ENCODE measurements at regions of chr3 and their contacts with region 1.

Region 1: GRCh38 chr3:27467545-27467944 is 16.6 kb downstream of the SLC4A7 start:
- DNase-seq: peak in 4 of 5 donors; percentile 41 to 49 (median 42)
- H3K4me3 ChIP-seq: no peak overlapping the region
- H3K4me3 Mint-ChIP-seq: peak overlapping the region in 3 of 8 donors; percentile 4 to 44 (median 39)
- H3K27ac ChIP-seq: no peak overlapping the region
- H3K27ac Mint-ChIP-seq: peak overlapping the region in 5 of 7 donors; percentile 6 to 63 (median 27)
- H3K4me1 ChIP-seq: peaks cover 30% of the 10 kb centered on the region
- H3K4me1 Mint-ChIP-seq: peaks cover 25 to 57% (median 35%) of the 10 kb centered on the region in 4 donors
- H3K27me3 ChIP-seq: no peaks in the 10 kb centered on the region
- H3K27me3 Mint-ChIP-seq: no peaks in the 10 kb centered on the region

Region 2: DNA sequence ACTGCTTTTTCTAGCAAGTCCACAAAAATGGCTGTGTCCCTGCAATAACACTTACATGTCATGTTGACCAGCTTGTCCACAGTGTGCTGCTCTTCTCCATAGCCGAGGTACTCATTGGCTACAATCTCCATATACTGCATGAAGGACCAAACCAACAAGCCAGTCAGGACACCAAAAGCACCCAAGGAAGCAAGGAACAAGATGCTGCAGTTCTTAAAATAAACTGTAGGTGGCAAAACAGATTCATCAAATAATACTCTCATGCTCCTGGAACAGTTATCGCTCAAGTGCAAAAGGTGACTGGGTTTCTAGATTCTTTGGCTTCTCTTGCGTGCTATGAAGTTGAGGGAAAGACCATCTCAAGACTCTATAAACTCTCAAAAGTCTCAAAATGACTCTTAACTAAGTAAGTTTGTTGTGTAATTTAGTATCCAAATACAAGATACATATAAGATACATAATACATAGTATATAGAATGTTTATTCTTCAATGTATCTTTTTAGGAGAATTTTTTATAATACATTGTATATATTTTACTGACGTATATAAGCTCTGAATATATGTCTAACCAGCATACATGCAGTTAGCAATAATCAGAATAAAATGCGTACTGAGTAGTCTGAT is 155.4 kb before region 1 on chr3:
- CTCF ChIA-PET with region 1: interaction called, 6 read pairs
- POLR2A ChIA-PET with region 1: no interaction called
- intact Hi-C with region 1: loop called (anchors 1 kb)
- DNase-seq: peak in 4 of 5 donors; percentile 52 to 60 (median 59)
- H3K4me3 ChIP-seq: no peak overlapping the region
- H3K4me3 Mint-ChIP-seq: no peak overlapping the region
- H3K27ac ChIP-seq: no peak overlapping the region
- H3K27ac Mint-ChIP-seq: peak overlapping the region in 1 of 7 donors; percentile 5
- H3K4me1 ChIP-seq: no peaks in the 10 kb centered on the region
- H3K4me1 Mint-ChIP-seq: no peaks in the 10 kb centered on the region
- H3K27me3 ChIP-seq: no peaks in the 10 kb centered on the region
- H3K27me3 Mint-ChIP-seq: no peaks in the 10 kb centered on the region

Region 3: DNA sequence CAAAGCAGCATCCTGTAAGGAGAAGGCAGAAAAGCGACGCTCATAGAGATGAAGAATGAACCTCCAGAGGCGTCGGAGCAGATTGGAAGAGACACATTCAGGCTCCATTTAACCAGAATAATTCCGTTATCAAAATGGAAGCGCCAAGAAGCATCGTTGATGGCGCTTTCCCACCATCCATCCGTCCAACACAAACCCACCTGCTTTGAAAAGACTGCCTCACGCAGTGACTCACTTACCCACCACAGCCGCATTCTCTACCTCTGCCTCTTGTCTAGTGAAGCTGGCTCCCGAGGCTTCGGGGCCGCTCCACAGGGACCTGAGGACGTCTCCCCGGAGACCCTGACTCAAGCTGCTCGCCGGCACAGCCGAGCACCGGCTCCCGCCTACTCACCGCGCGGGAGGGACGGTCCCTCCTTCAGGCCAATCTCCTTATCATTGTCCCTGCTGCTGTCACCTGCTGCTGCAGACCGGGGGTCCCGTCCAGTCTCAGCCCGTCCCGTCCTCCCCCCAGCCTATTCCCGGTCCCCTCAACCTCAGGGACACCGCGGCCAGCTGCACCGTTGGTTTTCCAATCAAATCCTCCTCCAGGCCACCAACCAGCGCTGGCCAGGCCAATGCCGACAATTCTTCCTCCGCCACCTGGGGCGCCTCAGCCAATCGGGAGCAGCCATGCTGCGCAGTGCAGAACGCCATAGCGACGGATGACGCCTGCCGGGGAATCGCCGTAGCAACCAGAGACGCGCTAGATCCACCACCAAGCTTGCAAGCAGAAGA is 98.5 kb before region 1 on chr3 and contains the start of gene NEK10:
- CTCF ChIA-PET with region 1: interaction called, 10 read pairs
- POLR2A ChIA-PET with region 1: no interaction called
- intact Hi-C with region 1: no loop called
- DNase-seq: peak; percentile 91 to 94 (median 93)
- H3K4me3 ChIP-seq: peak within 1 kb of the TSS; percentile 64 to 81
- H3K4me3 Mint-ChIP-seq: peak within 1 kb of the TSS; percentile 91 to 97 (median 96)
- H3K27ac ChIP-seq: peak within 1 kb of the TSS; percentile 39
- H3K27ac Mint-ChIP-seq: peak within 1 kb of the TSS; percentile 80 to 98 (median 94)
- H3K4me1 ChIP-seq: peaks cover 11% of the 10 kb centered on the region
- H3K4me1 Mint-ChIP-seq: peaks cover 12 to 20% (median 17%) of the 10 kb centered on the region in 4 donors
- H3K27me3 ChIP-seq: no peaks in the 10 kb centered on the region
- H3K27me3 Mint-ChIP-seq: no peaks in the 10 kb centered on the region
- total RNA-seq, gene NEK10: 1.4 to 2.7 TPM

Region 4: DNA sequence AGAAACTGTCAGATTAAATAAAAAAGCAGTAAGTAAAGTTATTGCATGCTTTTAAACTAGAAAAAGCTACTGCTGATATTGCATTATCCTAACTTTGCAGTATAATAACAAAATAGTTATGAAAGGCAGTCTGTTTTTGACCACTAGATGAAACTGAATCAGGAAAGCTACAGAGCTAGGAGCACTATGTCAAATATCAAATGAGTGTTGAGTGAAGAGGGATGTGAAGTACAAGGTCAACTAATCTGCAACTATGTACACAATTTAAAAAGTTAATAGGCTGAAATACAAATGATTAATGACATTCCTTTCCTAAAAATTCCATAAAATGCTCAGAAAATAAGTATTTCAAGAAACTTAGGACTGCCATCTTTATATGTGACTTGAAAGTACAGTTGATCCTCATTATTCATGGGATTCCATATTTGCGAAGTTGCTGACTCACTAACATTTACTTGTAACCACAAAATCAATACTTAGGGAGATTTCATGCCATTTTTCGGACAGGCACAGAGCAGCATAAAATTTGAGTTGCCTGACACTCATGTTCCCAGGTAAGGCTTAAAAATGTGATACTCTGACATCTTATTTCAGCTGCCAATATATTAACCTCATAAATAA is 17.9 kb before region 1 on chr3:
- CTCF ChIA-PET with region 1: interaction called, 10 read pairs
- POLR2A ChIA-PET with region 1: no interaction called
- intact Hi-C with region 1: no loop called
- DNase-seq: no peak
- H3K4me3 ChIP-seq: no peak overlapping the region
- H3K4me3 Mint-ChIP-seq: no peak overlapping the region
- H3K27ac ChIP-seq: no peak overlapping the region
- H3K27ac Mint-ChIP-seq: peak overlapping the region in 1 of 7 donors; percentile 7
- H3K4me1 ChIP-seq: peaks cover 29% of the 10 kb centered on the region
- H3K4me1 Mint-ChIP-seq: peaks cover 26 to 44% (median 38%) of the 10 kb centered on the region in 4 donors
- H3K27me3 ChIP-seq: no peaks in the 10 kb centered on the region
- H3K27me3 Mint-ChIP-seq: no peaks in the 10 kb centered on the region

Region 5: DNA sequence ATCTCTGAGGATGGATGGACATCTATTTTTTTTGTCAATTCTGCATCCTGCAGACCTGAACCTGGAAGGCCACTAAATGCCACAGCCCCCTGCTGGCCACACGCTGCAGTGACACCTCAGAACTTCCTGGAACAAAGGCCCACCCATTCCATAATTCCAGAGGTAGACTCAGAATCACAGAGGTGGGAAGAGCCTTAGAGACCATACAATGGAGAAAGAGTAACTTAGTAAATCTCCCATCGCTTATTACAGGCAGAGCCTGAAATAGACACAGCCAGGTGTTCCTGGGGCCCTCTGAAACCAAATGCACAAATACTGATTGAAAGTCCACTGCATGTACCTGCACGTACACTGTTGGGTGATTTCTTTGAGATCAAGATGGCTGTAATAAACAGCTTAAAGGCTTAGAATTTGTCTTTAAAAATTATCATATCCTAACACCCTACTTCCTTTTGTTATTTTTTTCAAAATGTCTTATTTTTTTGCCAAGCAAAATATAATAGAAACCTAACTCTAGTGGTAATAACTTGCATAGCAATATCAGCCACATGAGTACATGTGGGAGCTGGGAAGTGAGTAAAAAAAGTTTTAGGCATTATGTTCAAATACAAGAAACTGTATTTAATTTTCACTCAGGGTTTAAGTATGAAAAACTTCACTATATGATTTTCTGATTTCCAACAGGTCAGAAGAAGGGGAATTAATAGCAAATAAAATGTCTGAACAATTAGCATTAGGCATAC is 191.9 kb after region 1 on chr3:
- CTCF ChIA-PET with region 1: interaction called, 8 read pairs
- POLR2A ChIA-PET with region 1: no interaction called
- intact Hi-C with region 1: loop called (anchors 5 kb)
- DNase-seq: peak in 4 of 5 donors; percentile 29 to 42 (median 38)
- H3K4me3 ChIP-seq: no peak overlapping the region
- H3K4me3 Mint-ChIP-seq: no peak overlapping the region
- H3K27ac ChIP-seq: no peak overlapping the region
- H3K27ac Mint-ChIP-seq: peak overlapping the region in 1 of 7 donors; percentile 30
- H3K4me1 ChIP-seq: no peaks in the 10 kb centered on the region
- H3K4me1 Mint-ChIP-seq: peaks cover 9 to 15% (median 11%) of the 10 kb centered on the region in 4 donors
- H3K27me3 ChIP-seq: no peaks in the 10 kb centered on the region
- H3K27me3 Mint-ChIP-seq: peaks cover 0 to 2% of the 10 kb centered on the region in 2 donors

Region 6: DNA sequence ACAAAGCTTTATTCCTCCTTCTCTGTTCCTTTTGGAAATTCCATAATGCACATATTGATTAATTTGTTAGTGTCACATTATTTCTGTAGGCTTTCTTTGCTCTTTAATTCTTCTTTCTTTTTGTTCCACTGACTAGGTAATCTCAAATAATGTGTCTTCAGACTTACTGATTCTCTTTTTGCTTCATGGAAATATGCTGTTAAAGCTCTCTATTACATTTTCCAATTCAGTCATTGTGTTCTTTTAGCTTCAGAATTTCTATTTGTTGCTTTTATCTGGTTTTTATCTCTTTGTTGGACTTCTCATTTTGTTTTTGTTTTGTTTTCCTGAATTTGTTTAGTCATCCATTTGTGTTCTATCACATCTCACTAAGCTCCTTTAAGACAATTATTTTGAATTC is 401.6 kb after region 1 on chr3:
- CTCF ChIA-PET with region 1: no interaction called
- POLR2A ChIA-PET with region 1: no interaction called
- intact Hi-C with region 1: no loop called
- DNase-seq: no peak
- H3K4me3 ChIP-seq: no peak overlapping the region
- H3K4me3 Mint-ChIP-seq: peak overlapping the region in 1 of 8 donors; percentile 28
- H3K27ac ChIP-seq: no peak overlapping the region
- H3K27ac Mint-ChIP-seq: peak overlapping the region in 1 of 7 donors; percentile 9
- H3K4me1 ChIP-seq: no peaks in the 10 kb centered on the region
- H3K4me1 Mint-ChIP-seq: peaks cover 0 to 5% (median 1%) of the 10 kb centered on the region in 4 donors
- H3K27me3 ChIP-seq: no peaks in the 10 kb centered on the region
- H3K27me3 Mint-ChIP-seq: peaks cover 0 to 1% of the 10 kb centered on the region in 2 donors